Activated B cell treated with CpG ODN at 0.5 μM for 24 hours (primary cell): ENCODE measurements at regions of chr14 and their contacts with region 1.

Region 1: DNA sequence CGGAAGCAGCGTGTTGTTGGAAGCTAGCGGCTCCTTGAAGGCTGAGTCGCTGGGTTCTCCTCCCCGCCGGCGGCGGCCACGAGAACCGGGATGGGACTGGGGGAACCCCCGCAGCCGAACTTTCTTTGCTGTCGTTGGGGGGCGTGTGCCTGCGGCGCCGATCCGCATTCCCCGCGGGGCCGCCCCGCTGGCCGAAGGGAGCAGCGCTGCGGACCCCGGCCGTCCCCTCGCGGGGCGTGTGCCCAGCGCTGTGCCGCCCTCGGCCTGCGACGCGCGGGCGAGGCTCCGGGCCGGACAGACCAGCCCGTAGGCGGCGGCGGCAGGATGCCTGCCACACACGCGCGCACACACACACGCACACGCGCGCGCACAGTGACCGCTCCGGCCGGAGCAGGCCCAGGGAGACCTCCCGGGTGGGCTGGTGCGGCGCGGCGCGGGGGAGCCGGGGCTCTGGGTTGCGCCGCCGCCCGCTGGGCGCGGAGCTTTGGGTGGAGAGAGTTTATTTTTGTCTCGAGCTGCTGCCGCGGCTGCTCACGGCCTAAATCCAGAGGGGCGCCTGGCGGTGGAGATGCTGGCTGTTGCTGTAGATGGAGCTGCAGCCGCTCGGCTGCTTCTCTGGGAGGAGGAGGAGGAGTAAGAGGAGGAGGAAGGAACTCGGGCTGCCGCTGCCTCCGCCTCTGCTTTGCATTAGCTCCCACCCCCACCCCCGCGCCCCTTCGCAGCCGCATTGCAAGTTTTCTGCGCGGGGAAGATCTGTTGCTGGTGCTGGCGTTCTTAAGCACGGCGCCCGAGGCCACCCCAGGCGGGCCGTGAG is at the start of gene SAMD4A:
- DNase-seq: peak; percentile 63
- ATAC-seq: peak; percentile 30
- H3K4me3 Mint-ChIP-seq: peak within 1 kb of the TSS; percentile 99
- H3K27ac Mint-ChIP-seq: peak within 1 kb of the TSS; percentile 96
- H3K4me1 Mint-ChIP-seq: peaks cover 28% of the 10 kb centered on the region
- H3K27me3 Mint-ChIP-seq: peaks cover 4% of the 10 kb centered on the region
- CTCF ChIP-seq: no peak
- total RNA-seq, gene SAMD4A: 6.4 and 8.7 TPM in 2 replicates

Region 2: GRCh38 chr14:54440873-54441868 is 125.4 kb before region 1 on chr14 and contains the start of gene CNIH1:
- CTCF ChIA-PET with region 1: interaction called, 3 read pairs
- POLR2A ChIA-PET with region 1: no interaction called
- intact Hi-C with region 1: loop called (anchors 1 kb)
- DNase-seq: peak; percentile 98
- ATAC-seq: peak; percentile 95
- H3K4me3 Mint-ChIP-seq: peak within 1 kb of the TSS; percentile 86
- H3K27ac Mint-ChIP-seq: peak within 1 kb of the TSS; percentile 88
- H3K4me1 Mint-ChIP-seq: peaks cover 50% of the 10 kb centered on the region
- H3K27me3 Mint-ChIP-seq: peaks cover 3% of the 10 kb centered on the region
- CTCF ChIP-seq: peak; percentile 40
- total RNA-seq, gene CNIH1: 40.6 and 43.5 TPM in 2 replicates

Region 3: GRCh38 chr14:54642801-54643697 is 76.4 kb after region 1 on chr14:
- CTCF ChIA-PET with region 1: interaction called, 48 read pairs
- POLR2A ChIA-PET with region 1: interaction called, 3 read pairs
- intact Hi-C with region 1: loop called (anchors 1 kb)
- DNase-seq: no peak
- ATAC-seq: no peak
- H3K4me3 Mint-ChIP-seq: no peak overlapping the region
- H3K27ac Mint-ChIP-seq: no peak overlapping the region
- H3K4me1 Mint-ChIP-seq: no peaks in the 10 kb centered on the region
- H3K27me3 Mint-ChIP-seq: no peaks in the 10 kb centered on the region
- CTCF ChIP-seq: no peak

Region 4: DNA sequence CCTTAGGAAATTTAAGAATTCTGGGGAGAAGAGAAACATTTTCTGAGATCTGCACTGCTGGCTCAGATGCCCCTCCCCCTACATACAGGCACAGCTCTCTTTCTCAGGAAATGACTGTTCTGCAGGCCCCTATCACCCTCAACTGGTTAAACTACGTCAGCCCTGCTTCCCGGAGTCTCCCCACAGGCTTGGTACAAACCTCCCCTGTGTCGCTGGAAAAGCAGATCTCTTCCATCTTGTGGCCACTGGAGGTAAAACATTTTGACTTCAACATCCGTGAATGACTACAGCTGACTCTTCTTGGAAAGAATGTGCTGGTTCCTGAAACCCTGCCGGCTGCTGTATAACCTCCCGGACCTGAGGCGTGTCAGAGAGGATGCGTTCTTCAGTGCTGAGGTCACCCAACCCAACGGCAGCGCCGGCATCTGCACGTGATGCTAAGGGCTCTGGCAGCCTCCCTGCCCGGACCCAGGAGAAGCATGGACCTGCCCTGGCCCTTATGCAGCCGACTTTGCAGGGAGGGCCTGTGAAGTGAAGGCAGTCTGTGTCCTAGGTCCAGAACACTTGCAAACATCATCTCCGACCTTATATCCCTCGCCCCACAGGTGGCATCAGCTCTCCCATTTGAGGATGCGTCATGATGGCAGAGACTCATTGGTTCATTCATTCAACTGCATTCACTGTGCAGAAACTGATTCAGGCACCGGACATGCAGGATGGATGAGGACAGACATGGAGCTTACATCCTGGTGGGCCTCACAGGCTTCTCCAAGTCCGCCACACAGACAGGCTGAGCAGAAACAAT is 206.8 kb after region 1 on chr14:
- CTCF ChIA-PET with region 1: interaction called, 78 read pairs
- POLR2A ChIA-PET with region 1: interaction called, 67 read pairs
- intact Hi-C with region 1: loop called (anchors 1 kb)
- DNase-seq: no peak
- ATAC-seq: peak; percentile 32
- H3K4me3 Mint-ChIP-seq: peak overlapping the region; percentile 32
- H3K27ac Mint-ChIP-seq: peak overlapping the region; percentile 62
- H3K4me1 Mint-ChIP-seq: peaks cover 50% of the 10 kb centered on the region
- H3K27me3 Mint-ChIP-seq: no peaks in the 10 kb centered on the region
- CTCF ChIP-seq: no peak

Region 5: DNA sequence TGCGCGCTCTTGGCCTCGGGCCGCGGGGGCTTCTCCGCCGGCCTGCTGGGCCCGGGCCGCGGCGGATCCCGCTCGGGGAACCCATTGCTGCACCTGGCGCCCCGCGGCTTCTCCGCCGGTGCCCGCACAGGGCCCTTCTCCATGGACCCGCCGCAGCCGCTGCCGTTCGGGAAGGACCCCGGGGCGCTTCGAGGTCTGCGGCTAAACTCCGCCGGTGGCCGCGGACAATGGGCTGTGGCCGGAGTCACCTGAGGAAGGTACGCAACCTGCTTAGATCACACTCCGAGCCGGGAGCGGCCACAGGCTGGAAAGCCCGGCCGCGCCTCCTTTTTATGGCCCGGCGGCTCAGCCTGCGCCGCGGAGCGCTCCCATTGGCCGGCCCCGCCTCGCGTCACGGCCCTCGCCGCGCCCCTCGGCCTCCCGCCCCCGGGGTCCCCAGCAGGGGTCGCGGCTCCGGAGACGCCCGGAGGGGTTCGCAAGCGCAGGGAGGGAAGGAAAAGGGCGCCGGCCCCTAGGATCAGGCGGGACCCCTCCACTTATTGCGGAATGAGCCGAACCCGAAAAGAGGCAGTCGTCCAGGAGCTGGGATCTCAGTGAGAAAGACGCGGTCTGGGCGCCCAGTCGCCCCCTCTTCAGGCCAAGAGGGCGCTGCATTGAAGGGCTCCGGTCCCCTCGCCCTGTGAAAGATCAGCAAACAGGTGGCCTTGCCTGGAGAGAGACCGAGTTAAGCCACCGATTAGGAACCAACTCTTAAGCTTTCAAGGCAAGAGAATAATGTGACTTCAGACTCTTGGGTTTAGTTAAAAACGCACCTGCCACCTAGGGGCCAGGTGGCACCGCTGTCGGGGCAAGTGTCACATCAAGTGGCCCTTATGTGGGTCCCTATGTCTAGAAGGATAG is 336.2 kb after region 1 on chr14 and contains the start of gene GCH1:
- CTCF ChIA-PET with region 1: interaction called, 5 read pairs
- POLR2A ChIA-PET with region 1: no interaction called
- intact Hi-C with region 1: loop called (anchors 1 kb)
- DNase-seq: peak; percentile 85
- ATAC-seq: peak; percentile 87
- H3K4me3 Mint-ChIP-seq: peak within 1 kb of the TSS; percentile 89
- H3K27ac Mint-ChIP-seq: peak within 1 kb of the TSS; percentile 90
- H3K4me1 Mint-ChIP-seq: peaks cover 14% of the 10 kb centered on the region
- H3K27me3 Mint-ChIP-seq: no peaks in the 10 kb centered on the region
- CTCF ChIP-seq: no peak
- total RNA-seq, gene GCH1: 15.5 and 17.2 TPM in 2 replicates

Region 6: DNA sequence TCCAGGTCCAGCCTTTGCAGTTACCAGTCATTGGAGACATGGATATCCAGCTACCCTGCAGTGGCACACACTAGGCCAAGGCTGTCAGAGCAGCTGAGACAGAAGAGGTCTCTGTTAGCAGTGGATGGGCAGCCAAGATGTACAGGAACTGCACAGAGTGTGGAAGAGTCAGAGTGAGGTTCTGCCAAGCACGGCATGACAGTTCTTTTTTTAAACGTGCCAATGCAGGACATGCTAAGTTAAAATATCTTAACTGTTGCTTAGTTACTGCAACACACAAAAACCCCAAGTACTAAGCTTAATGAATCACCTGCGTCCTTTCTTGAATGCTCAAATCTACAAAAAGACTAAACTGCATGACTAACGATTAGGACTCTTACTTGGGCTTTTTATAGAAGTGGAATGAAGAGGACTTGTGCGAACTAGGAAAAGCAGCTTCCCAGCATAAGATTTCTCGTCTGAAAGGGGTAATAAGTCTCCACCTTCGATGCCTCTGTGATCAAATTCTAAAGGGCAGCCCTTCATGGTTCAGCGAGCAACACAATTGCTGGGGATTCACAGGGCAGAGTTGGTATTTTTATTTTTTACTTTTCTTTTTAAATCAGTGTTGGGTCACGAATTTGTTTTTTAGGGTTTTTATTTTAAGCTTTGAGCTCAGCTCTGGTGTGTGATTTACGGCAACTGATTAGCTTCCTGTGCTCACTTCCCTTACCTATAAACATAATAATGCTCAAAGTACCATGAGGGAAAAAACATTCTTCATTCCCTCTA is 505.4 kb after region 1 on chr14:
- CTCF ChIA-PET with region 1: no interaction called
- POLR2A ChIA-PET with region 1: interaction called, 3 read pairs
- intact Hi-C with region 1: loop called (anchors 1 kb)
- DNase-seq: peak; percentile 47
- ATAC-seq: peak; percentile 77
- H3K4me3 Mint-ChIP-seq: peak overlapping the region; percentile 79
- H3K27ac Mint-ChIP-seq: peak overlapping the region; percentile 98
- H3K4me1 Mint-ChIP-seq: peaks cover 75% of the 10 kb centered on the region
- H3K27me3 Mint-ChIP-seq: no peaks in the 10 kb centered on the region
- CTCF ChIP-seq: no peak

Region 7: GRCh38 chr14:55117803-55118441 is 551.3 kb after region 1 on chr14:
- CTCF ChIA-PET with region 1: no interaction called
- POLR2A ChIA-PET with region 1: no interaction called
- intact Hi-C with region 1: no loop called
- DNase-seq: no peak
- ATAC-seq: no peak
- H3K4me3 Mint-ChIP-seq: no peak overlapping the region
- H3K27ac Mint-ChIP-seq: no peak overlapping the region
- H3K4me1 Mint-ChIP-seq: no peaks in the 10 kb centered on the region
- H3K27me3 Mint-ChIP-seq: no peaks in the 10 kb centered on the region
- CTCF ChIP-seq: no peak